Right cardiac atrium (tissue), 5 donors: ENCODE measurements at regions of chr3 and their contacts with region 1.

Region 1: DNA sequence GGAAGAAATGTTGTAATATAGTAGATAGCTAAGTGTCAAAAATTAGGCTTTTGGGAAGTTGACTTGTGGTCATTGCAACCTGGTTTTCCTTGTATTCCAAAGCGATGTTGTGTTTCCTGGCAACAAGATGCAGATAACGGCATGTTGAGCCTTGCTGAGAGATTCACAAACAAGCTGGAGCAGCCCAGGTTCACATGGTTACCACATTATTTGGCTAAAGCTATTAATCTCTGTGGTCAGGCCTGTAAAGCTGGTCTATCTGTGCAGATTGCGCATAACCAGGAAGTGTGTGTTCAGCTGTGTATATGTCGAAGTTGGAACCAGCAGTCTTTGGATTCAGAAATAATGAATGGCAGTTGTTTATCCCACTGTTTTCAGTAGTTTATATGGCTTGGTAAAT is 6.6 kb downstream of the TIPARP start:
- DNase-seq: peak; percentile 39 to 59 (median 44)
- ATAC-seq: peak; percentile 91 to 93
- H3K4me3 ChIP-seq: peak overlapping the region; percentile 13
- H3K27ac ChIP-seq: peak overlapping the region; percentile 88
- H3K4me1 ChIP-seq: peaks cover 10% of the 10 kb centered on the region
- H3K27me3 ChIP-seq: no peaks in the 10 kb centered on the region

Region 2: DNA sequence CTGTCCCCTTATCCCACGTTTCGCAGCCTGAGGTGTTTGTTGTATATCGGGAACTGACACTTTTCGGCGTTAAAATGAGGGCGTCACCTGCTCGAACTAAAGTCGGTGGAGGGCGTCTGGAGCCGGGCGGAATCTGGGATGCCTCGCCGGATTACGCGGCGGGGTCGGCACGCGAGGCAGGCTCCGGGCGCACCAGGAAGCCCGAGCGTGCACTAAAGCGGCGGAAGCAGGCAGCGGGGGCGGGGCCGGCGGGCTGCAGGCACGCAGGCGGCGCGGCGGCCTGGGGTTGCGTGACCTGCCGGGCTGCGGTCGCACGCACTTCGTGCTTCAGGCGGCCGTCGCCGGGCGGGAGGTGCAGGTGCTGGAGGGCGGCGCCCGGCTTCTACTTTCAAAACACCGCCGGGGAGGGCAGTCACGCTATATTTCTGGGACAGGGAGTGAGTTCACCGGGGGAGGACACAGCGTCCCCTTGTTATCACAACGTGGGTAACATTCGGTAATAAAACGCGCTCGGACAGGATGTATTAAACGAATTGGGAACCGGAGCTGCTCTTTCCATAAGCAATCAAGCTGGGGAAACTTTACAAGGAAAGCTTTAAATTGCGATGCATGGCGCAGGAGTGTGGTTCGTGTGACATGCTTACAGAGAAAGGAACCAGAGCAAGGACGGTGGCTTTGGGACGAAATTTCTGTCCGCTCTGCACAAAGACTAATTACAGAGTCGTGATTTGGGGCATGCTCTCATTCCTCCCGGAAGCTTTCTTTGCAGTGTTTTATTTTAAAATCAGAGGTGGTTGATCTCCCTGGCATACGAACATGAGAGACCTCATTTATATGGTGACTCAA is 136.0 kb after region 1 on chr3:
- intact Hi-C with region 1: loop called in 3 of 4 experiments (anchors 10 kb)
- DNase-seq: peak; percentile 89 to 95 (median 93)
- ATAC-seq: peak; percentile 94 to 97
- H3K4me3 ChIP-seq: peak overlapping the region; percentile 50
- H3K27ac ChIP-seq: peak overlapping the region; percentile 98
- H3K4me1 ChIP-seq: no peaks in the 10 kb centered on the region
- H3K27me3 ChIP-seq: no peaks in the 10 kb centered on the region

Region 3: DNA sequence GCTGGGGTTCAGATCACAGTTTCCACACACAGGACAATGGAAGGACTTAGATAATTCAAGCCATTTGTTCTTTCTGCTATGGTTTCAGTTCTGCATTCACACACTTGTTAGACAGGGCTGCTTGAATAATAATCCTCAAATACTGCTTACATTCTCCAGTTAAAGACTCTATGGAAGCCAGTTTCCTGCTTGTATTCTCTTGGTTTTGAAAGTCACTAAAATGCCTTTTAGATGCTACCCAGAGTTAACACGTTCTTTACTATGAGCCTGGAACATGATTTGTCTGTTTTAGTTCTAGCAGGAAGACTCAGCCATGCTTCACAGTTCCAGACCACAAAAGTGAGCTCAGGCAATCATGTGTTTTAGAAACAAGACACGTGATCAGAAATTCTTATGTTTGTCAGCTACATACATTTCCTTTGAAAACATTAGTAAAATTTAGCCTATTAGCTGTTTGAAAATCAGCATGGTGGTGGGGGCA is 297.5 kb after region 1 on chr3:
- intact Hi-C with region 1: no loop called
- DNase-seq: peak in 1 of 3 donors; percentile 9
- ATAC-seq: no peak
- H3K4me3 ChIP-seq: no peak overlapping the region
- H3K27ac ChIP-seq: no peak overlapping the region
- H3K4me1 ChIP-seq: no peaks in the 10 kb centered on the region
- H3K27me3 ChIP-seq: no peaks in the 10 kb centered on the region

Region 4: DNA sequence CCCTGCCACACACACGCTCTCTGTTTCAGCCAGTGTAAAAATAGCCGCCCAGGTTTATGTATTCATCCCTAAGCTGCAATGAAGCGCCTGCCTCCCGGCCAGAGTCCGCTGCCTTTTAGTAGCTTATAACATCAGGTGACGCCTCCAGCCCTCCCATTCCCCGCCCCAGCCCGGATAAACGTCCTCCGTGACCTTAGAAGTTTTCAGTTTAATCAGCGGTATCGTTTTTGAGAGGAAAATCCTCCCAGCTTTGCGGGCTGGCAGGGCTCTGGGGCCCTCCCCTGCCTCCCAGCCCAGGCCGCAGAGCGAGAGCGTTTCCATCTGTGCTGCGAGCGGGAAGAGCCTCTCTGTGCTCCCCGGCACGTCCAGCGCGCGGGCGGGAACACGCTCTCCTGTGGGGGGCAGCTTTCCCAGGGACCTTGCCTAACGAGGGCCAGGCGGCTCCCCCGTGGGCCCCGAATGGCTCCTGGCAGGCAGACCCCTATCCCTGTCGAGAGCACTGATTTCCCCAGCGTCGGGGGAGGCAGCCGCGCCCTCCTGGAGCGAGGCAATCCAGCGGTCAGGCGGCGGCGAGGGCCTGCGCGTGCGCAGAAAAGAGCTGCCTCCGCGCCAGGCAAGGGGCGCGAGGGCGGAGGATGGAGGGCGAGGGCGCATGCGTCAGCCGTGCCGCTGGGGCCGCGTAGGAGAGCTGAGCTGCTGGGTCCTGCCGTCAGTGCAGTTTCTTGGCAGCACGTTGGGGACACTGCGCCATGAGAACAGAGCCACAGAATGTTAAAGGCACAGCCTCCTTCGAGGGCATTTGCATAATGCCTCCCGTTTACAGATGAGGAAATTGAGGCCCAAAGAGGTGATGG is 407.8 kb after region 1 on chr3:
- intact Hi-C with region 1: loop called in 3 of 4 experiments (anchors 5 to 10 kb)
- DNase-seq: peak; percentile 97 to 99 (median 99)
- ATAC-seq: peak; percentile 91 to 92
- H3K4me3 ChIP-seq: peak overlapping the region; percentile 45
- H3K27ac ChIP-seq: peak overlapping the region; percentile 98
- H3K4me1 ChIP-seq: peaks cover 14% of the 10 kb centered on the region
- H3K27me3 ChIP-seq: no peaks in the 10 kb centered on the region

Region 5: DNA sequence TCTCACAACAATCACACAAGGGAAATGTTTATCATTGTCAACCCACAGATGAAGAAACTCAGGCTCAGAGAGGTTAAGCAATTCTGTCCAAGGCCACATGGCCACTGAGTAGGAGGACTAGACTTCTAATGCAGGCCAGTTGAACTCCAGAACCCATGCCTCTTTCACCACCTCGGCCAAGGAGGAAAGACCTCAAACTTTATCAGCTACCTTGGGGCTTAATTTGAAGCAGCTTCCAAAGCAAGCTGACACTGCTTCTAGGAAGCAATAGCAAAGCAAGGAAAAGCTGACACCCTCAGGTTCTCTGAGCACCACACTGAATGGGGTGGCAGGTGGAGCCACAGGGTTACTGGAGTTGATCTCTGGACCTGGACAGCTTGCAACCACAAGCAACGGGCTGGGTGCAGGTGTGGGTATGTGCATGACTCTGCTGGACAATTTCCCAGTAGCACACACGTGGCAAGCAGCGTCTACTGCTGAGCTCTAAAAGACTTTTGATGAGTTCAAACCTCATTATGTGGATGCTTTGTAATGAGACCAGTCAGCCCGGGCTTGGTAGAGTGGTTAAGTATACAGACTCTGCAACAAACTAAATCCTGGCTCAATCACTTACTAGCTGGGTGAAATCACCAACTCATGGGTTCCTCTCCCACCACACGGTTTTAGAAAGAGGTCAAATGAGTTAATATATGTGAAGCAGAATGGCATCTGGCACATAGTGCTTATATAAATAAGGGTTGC is 455.8 kb after region 1 on chr3:
- intact Hi-C with region 1: loop called in 3 of 4 experiments (anchors 2 to 10 kb)
- DNase-seq: peak in 2 of 3 donors; percentile 44 to 67
- ATAC-seq: peak; percentile 20 to 23
- H3K4me3 ChIP-seq: no peak overlapping the region
- H3K27ac ChIP-seq: peak overlapping the region; percentile 33
- H3K4me1 ChIP-seq: peaks cover 21% of the 10 kb centered on the region
- H3K27me3 ChIP-seq: no peaks in the 10 kb centered on the region